ENCODE measurements at regions of chr6 and their contacts with region 1.

Region 1: DNA sequence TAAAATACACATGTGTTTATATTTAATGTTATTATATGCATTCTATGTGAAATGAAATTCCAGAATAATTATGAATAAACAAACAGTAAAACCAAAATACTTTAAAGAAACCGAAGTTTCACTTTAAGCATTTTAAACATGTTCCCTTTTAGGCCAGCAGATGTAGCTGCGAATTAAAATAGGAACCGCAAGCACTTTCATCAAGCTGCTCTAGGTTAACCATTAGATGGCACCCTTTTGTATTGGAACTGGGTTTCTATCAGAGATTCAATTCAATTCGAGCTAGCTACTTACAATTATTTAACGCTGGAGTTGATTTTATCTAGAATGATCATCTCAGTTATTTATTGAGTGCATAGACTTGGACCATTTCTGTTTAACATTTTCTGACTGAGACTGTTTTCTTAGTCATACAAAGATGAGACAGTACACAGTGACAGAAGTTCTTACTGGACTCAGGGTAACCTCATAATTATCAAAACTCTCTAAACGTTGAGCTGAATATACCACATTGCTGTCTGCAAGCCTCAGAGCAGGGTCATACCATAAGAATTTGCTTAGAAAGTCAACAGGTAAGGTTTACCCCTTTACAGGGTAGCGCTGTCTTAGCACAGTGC is 8.5 kb downstream of the TMEM242 start:
- DNase-seq: no peak
- H3K4me3 ChIP-seq: no peak overlapping the region
- H3K27ac ChIP-seq: peak overlapping the region in 1 of 3 donors; percentile 24
- H3K4me1 ChIP-seq: peaks cover 8 to 13% of the 10 kb centered on the region in 2 donors
- H3K27me3 ChIP-seq: no peaks in the 10 kb centered on the region
- CTCF ChIP-seq: peak; percentile 65 to 94 (median 77)
- POLR2A ChIP-seq: no peak

Region 2: GRCh38 chr6:156901309-156902019 is 413.3 kb before region 1 on chr6:
- intact Hi-C with region 1: no loop called
- DNase-seq: no peak
- H3K4me3 ChIP-seq: no peak overlapping the region
- H3K27ac ChIP-seq: no peak overlapping the region
- H3K4me1 ChIP-seq: peaks cover 21 to 37% of the 10 kb centered on the region in 2 donors
- H3K27me3 ChIP-seq: no peaks in the 10 kb centered on the region
- CTCF ChIP-seq: no peak
- POLR2A ChIP-seq: no peak

Region 3: DNA sequence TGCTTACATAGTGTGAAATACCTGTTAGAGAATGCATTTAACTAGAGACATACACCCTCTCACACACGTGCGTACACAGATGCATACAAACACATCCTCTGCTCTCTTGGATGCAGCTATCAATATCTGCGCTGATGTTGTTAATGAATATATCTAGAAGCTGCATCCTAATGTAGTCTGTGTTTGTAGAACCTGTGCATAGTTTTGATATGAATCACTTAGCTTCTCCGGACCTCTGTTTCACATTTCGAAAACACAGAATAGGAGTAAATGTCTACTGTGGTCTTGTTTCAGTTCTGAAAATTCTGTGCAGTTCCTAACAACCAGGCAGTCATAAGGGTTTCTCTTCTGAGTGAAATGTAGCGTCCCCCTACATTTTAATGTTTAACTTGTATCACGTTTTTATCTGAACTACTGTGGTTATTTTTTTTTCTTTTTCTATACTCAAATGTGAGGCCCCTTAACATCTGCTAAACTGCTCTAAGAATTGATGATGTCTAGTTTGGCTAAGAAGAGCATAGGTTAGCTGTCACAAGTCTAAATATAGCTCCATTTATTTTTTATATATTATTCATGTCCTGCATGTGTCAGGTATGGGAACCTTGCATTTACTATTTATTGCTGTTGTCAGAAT is 246.0 kb before region 1 on chr6:
- intact Hi-C with region 1: no loop called
- DNase-seq: no peak
- H3K4me3 ChIP-seq: no peak overlapping the region
- H3K27ac ChIP-seq: no peak overlapping the region
- H3K4me1 ChIP-seq: peaks cover 25 to 48% of the 10 kb centered on the region in 2 donors
- H3K27me3 ChIP-seq: no peaks in the 10 kb centered on the region
- CTCF ChIP-seq: no peak
- POLR2A ChIP-seq: no peak

Region 4: DNA sequence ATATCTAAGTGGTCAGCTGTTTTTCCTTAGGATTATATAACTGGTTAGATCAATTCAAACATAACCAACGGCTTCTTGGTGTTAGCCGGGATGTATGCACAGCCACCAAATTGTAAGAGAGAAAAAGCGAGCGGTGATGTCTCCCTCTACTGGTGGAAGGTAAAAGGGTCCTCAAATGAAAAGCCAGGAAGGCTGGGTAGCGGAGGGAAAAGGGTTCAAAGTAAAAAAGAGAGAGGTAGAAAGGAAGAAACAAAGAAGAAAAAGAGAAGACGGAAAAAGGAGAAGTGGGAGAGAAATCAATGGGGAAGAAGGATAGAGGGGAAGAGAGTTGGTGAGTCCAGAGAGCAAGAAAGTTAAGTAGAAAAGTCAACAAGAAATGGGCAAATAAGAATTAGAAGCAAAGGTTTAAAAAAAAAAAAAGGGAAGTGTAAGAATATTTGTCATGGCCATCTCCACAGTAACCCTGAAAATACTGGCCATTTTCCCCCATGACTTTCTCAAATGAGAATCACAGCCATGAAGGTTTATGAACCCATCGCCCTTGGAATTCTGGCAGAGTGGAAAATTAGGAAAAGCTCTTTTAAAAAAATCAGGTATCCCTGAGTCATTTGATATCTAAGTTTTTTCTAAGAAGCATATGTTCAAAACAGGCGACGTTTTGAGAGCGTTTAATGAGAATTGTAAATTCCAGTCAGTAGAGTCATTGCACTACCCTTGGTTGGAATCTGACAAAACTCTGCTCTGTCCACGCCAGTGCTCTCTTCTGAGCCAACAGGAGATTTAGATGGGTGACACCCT is 352.6 kb after region 1 on chr6:
- intact Hi-C with region 1: loop called (anchors 10 kb)
- DNase-seq: peak; percentile 49 to 55
- H3K4me3 ChIP-seq: no peak overlapping the region
- H3K27ac ChIP-seq: no peak overlapping the region
- H3K4me1 ChIP-seq: peaks cover 0 to 10% of the 10 kb centered on the region in 2 donors
- H3K27me3 ChIP-seq: no peaks in the 10 kb centered on the region
- CTCF ChIP-seq: peak; percentile 61 to 98 (median 76)
- POLR2A ChIP-seq: no peak

Measured in thyroid gland (tissue), 4 donors.